ENCODE measurements at regions of chr11 and their contacts with region 1.

Region 1: GRCh38 chr11:2305140-2305840 is 3.5 kb downstream of the TSPAN32 start:
- DNase-seq: peak; percentile 71 to 88 (median 78)
- H3K4me3 ChIP-seq: peak overlapping the region; percentile 70
- H3K4me3 Mint-ChIP-seq: peak overlapping the region; percentile 77 to 98 (median 94)
- H3K27ac ChIP-seq: peak overlapping the region; percentile 67
- H3K27ac Mint-ChIP-seq: peak overlapping the region; percentile 77 to 97 (median 90)
- H3K4me1 ChIP-seq: peaks cover 53% of the 10 kb centered on the region
- H3K4me1 Mint-ChIP-seq: peaks cover 26 to 68% (median 37%) of the 10 kb centered on the region in 3 donors
- H3K27me3 ChIP-seq: no peaks in the 10 kb centered on the region
- H3K27me3 Mint-ChIP-seq: no peaks in the 10 kb centered on the region

Region 2: DNA sequence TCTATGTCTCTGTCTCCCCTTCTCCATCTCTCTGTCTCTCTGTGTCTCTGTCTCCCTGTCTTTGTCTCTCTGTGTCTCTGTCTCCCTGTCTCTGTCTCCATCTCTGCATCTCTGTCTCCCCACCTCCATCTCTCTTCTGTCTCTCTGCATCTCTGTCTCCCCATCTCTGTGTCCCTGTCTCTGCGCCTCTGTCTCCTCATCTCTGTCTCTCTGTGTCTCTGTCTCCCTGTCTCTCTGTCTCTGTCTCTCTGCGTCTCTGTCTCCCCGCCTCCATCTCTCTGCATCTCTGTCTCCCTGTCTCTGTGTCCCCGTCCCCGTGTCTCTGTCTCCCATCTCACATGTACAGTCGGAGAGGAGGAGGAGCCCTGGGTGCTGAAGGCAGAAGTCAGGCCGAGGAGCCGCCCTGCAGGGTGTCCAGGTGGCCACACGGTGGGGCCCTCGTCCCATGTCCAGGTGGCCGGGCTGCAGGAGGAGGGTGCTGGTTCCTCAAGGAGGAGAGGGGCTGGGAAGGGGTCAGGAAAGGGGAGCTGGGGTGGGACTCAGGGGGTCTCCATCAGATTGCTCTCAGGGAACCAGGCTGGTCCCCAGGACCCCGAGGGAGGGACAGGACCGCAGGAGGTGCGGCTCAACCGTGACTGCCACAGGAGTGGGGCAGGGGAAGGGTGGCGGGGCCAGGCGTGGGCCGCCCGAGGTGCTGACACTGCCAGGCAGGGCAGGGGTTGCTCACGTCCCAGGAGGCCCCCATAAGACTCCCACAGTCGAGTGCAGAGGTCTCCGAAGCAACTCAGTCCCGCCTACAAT is 108.1 kb before region 1 on chr11:
- CTCF ChIA-PET with region 1: interaction called, 21 read pairs
- POLR2A ChIA-PET with region 1: no interaction called
- DNase-seq: peak; percentile 59 to 79 (median 62)
- H3K4me3 ChIP-seq: no peak overlapping the region
- H3K4me3 Mint-ChIP-seq: peak overlapping the region in 1 of 7 donors; percentile 24
- H3K27ac ChIP-seq: no peak overlapping the region
- H3K27ac Mint-ChIP-seq: peak overlapping the region in 2 of 8 donors; percentile 5 to 63
- H3K4me1 ChIP-seq: peaks cover 6% of the 10 kb centered on the region
- H3K4me1 Mint-ChIP-seq: peaks cover 7 to 13% (median 12%) of the 10 kb centered on the region in 3 donors
- H3K27me3 ChIP-seq: peaks cover 7% of the 10 kb centered on the region
- H3K27me3 Mint-ChIP-seq: peaks cover 0 to 3% of the 10 kb centered on the region in 2 donors

Region 3: DNA sequence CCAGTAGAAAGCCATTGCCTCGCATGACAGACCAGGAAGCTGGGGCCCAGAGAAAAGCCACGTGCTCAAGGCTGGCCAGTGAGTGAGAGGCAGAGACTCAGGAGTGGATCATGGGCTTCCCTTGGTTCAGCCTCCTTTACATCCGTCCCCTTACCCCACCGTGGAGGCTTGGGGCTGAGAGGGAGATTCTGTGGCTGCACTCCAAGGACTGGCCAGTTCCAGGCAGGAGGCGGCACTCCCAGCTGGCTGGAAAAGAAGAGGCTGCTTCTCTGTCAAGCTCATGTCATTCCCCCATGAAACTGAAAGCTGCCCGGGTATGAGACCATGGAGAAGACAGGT is 28.3 kb before region 1 on chr11:
- CTCF ChIA-PET with region 1: interaction called, 10 read pairs
- POLR2A ChIA-PET with region 1: no interaction called
- DNase-seq: no peak
- H3K4me3 ChIP-seq: no peak overlapping the region
- H3K4me3 Mint-ChIP-seq: no peak overlapping the region
- H3K27ac ChIP-seq: no peak overlapping the region
- H3K27ac Mint-ChIP-seq: no peak overlapping the region
- H3K4me1 ChIP-seq: no peaks in the 10 kb centered on the region
- H3K4me1 Mint-ChIP-seq: peaks cover 0 to 3% (median 3%) of the 10 kb centered on the region in 3 donors
- H3K27me3 ChIP-seq: no peaks in the 10 kb centered on the region
- H3K27me3 Mint-ChIP-seq: peaks cover 12 to 32% of the 10 kb centered on the region in 2 donors

Region 4: GRCh38 chr11:2382936-2383851 is 77.9 kb after region 1 on chr11:
- CTCF ChIA-PET with region 1: interaction called, 29 read pairs
- POLR2A ChIA-PET with region 1: interaction called, 19 read pairs
- DNase-seq: peak in 1 of 5 donors; percentile 43
- H3K4me3 ChIP-seq: no peak overlapping the region
- H3K4me3 Mint-ChIP-seq: peak overlapping the region in 4 of 7 donors; percentile 8 to 87 (median 46)
- H3K27ac ChIP-seq: no peak overlapping the region
- H3K27ac Mint-ChIP-seq: peak overlapping the region in 7 of 8 donors; percentile 33 to 84 (median 63)
- H3K4me1 ChIP-seq: peaks cover 71% of the 10 kb centered on the region
- H3K4me1 Mint-ChIP-seq: peaks cover 66 to 94% (median 71%) of the 10 kb centered on the region in 3 donors
- H3K27me3 ChIP-seq: no peaks in the 10 kb centered on the region
- H3K27me3 Mint-ChIP-seq: no peaks in the 10 kb centered on the region

Region 5: GRCh38 chr11:2428322-2428795 is 123.1 kb after region 1 on chr11:
- CTCF ChIA-PET with region 1: interaction called, 317 read pairs
- POLR2A ChIA-PET with region 1: no interaction called
- DNase-seq: peak; percentile 72 to 90 (median 82)
- H3K4me3 ChIP-seq: no peak overlapping the region
- H3K4me3 Mint-ChIP-seq: no peak overlapping the region
- H3K27ac ChIP-seq: no peak overlapping the region
- H3K27ac Mint-ChIP-seq: no peak overlapping the region
- H3K4me1 ChIP-seq: no peaks in the 10 kb centered on the region
- H3K4me1 Mint-ChIP-seq: no peaks in the 10 kb centered on the region
- H3K27me3 ChIP-seq: no peaks in the 10 kb centered on the region
- H3K27me3 Mint-ChIP-seq: no peaks in the 10 kb centered on the region